Activated CD8-positive, alpha-beta T cell treated with anti-CD3 and anti-CD28 coated beads, Interleukin-2, amount 10 ng/mL, durations not matched to agents 7 days and 5 days (primary cell): ENCODE measurements at regions of chr1 and their contacts with region 1.

Region 1: GRCh38 chr1:23530747-23531561 is at the start of gene E2F2:
- DNase-seq: peak; percentile 90
- ATAC-seq: peak; percentile 76
- H3K4me3 Mint-ChIP-seq: peak within 1 kb of the TSS; percentile 96
- H3K27ac Mint-ChIP-seq: peak within 1 kb of the TSS; percentile 94
- H3K4me1 Mint-ChIP-seq: peaks cover 61% of the 10 kb centered on the region
- H3K27me3 Mint-ChIP-seq: no peaks in the 10 kb centered on the region
- total RNA-seq, gene E2F2: 75.0 to 80.3 TPM

Region 2: DNA sequence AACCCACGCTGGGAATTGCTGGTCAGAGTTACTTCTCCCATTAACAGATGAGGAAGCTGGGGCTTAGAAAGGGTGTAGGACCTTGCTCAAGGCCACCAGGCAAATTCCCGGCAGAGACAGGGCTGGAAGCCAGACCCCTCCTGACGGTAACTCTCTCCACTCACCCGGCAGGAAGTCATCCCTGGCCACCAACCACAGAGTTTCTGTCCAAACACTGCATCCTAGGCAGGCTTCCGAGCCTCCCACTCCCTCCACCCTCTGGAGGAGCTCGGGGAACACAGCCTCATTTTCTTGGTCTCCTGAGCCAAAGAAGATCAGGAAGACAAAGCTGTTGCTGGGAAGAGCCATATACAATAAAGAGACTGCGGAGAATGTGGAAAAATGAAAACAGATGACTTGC is 136.3 kb before region 1 on chr1:
- CTCF ChIA-PET with region 1: no interaction called
- POLR2A ChIA-PET with region 1: no interaction called
- DNase-seq: no peak
- ATAC-seq: no peak
- H3K4me3 Mint-ChIP-seq: no peak overlapping the region
- H3K27ac Mint-ChIP-seq: no peak overlapping the region
- H3K4me1 Mint-ChIP-seq: peaks cover 3% of the 10 kb centered on the region
- H3K27me3 Mint-ChIP-seq: no peaks in the 10 kb centered on the region

Region 3: GRCh38 chr1:23452011-23452411 is 78.9 kb before region 1 on chr1:
- CTCF ChIA-PET with region 1: no interaction called
- POLR2A ChIA-PET with region 1: no interaction called
- DNase-seq: peak; percentile 33
- ATAC-seq: peak; percentile 27
- H3K4me3 Mint-ChIP-seq: no peak overlapping the region
- H3K27ac Mint-ChIP-seq: no peak overlapping the region
- H3K4me1 Mint-ChIP-seq: peaks cover 18% of the 10 kb centered on the region
- H3K27me3 Mint-ChIP-seq: peaks cover 12% of the 10 kb centered on the region

Region 4: DNA sequence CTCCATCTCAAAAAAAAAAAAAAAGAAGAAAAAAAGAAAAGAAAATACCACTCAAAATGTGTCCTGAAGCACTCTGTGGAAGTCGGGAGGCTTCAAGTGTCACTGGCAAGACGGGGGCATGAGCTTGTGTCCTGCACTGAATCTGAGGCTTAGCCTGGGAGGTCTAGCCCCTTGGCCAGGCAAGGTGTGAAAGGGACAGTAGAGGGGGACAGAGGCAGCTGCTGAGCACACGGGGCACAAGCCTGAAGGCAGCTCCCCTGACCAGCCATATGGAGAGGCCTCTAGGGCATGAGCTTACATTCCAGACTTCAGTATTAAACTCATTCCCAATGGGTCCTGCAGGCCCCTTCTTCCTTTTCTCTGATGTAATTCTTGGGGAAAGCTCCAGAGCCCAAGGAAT is 23.4 kb before region 1 on chr1:
- CTCF ChIA-PET with region 1: interaction called, 3 read pairs
- POLR2A ChIA-PET with region 1: interaction called, 10 read pairs
- DNase-seq: no peak
- ATAC-seq: no peak
- H3K4me3 Mint-ChIP-seq: no peak overlapping the region
- H3K27ac Mint-ChIP-seq: no peak overlapping the region
- H3K4me1 Mint-ChIP-seq: peaks cover 2% of the 10 kb centered on the region
- H3K27me3 Mint-ChIP-seq: no peaks in the 10 kb centered on the region

Region 5: DNA sequence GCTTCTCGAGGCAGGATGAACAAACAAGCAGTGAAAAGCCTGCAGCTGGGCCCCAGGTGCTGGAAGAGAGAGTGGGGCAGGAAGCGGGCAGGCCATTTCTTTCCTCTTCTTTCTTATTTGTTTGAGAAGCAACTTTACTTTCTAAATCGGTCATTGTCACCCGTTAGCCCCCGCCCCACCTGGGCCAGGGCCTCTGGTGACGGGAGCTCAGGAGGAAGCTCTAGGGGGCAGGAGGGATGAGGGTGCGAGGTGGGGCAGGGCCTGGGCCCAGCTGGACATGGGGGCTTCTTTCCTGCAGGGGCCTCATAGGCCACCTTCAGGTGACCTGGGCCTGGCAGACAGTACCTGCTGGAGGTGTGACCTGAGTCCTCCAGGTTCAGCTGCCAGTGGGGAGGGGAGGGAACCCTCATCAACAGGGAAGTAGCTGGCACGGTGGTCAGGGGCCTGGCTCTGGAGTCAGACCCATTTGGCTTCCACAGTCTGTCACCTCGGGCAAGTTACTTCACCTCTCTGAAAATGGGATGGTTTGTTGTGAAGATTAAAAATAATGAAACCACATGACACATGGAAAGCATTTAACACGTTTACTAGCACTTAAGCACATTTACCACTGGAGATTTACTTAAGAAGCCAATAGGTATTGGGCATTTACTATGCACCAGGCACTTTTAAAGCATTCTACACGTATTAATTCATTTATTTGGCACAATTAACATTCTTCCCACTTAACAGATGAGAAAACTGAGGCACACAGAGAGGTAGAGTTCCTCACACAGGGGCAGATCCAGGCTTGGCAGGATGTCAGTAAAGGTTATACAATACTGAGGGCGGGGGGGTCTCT is 82.5 kb after region 1 on chr1:
- CTCF ChIA-PET with region 1: no interaction called
- POLR2A ChIA-PET with region 1: no interaction called
- DNase-seq: peak; percentile 73
- ATAC-seq: peak; percentile 66
- H3K4me3 Mint-ChIP-seq: peak overlapping the region; percentile 53
- H3K27ac Mint-ChIP-seq: peak overlapping the region; percentile 96
- H3K4me1 Mint-ChIP-seq: peaks cover 68% of the 10 kb centered on the region
- H3K27me3 Mint-ChIP-seq: no peaks in the 10 kb centered on the region

Region 6: DNA sequence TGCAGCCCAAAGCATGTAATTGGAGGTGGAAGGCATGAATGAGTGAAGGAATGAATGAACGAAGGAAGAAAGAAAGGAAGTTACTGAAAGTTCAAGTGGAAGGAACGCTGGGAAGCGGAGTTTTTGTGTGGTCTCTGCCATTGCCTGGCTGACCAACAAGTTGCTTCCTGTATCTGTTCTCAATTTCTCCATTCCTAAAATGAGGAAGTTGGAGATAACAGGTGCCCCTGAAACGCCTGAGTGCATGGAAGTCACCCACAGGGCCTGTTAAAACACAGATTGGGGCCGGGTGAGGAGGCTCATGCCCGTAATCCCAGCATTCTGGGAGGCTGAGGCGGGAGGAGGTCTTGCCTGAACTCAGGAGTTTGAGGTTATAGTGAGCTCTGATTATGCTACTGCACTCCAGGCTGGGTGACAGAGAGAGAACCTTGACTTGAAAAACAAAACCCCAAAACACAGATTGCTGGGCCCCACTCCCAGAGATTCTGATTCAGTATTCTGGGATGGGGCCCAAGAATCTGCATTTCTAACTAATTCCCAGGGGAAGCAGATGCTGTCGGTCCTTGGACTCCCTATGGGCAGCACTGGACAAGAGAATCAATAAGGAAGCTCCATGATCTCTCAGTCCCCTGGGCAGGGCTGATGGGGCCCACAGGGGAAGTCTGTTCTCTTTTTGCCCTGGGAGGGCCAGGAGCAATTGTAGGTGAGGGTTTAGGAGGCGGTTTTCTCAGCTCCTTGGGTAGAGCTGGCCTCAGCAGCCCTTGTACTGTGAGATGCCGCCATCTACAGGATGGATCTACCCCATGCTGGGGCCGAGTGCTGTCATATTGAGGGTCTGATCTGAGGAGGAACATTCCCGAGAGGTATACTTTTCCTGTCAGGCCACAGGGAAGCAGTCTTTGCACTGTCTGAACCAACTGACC is 385.5 kb after region 1 on chr1:
- CTCF ChIA-PET with region 1: no interaction called
- POLR2A ChIA-PET with region 1: no interaction called
- DNase-seq: peak; percentile 84
- ATAC-seq: peak; percentile 93
- H3K4me3 Mint-ChIP-seq: no peak overlapping the region
- H3K27ac Mint-ChIP-seq: peak overlapping the region; percentile 5
- H3K4me1 Mint-ChIP-seq: peaks cover 49% of the 10 kb centered on the region
- H3K27me3 Mint-ChIP-seq: no peaks in the 10 kb centered on the region